GM23248 (cell line): ENCODE measurements at regions of chrX and their contacts with region 1.

Region 1: DNA sequence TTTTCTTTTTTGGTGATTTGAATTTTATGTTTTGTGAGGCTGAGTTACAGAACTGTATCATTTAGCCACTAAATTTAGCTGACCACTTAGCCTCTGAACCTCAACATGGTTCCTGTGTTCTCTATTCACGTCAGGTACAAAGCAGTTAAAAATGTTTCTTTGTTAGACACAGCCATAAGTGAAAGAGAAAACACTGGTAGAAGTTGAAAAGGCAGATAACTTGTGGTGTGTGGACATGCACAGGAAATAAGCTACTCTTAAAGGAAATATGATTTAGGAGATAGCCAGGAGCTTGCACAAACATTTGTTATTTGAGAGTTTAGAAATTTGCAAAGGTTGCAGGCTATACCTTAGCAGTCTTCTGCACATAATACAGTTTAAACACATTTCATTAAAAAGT is 171.0 kb upstream of the RPS6KA3 start:
- DNase-seq: no peak
- H3K4me3 ChIP-seq: no peak overlapping the region
- H3K27ac ChIP-seq: no peak overlapping the region
- H3K4me1 ChIP-seq: peaks cover 6% of the 10 kb centered on the region; the same call in 1 of the 2 replicates
- H3K27me3 ChIP-seq: no peaks in the 10 kb centered on the region

Region 2: GRCh38 chrX:20252381-20253231 is 185.1 kb before region 1 on chrX:
- in situ Hi-C with region 1: loop called (anchors 10 kb)
- DNase-seq: peak; percentile 51
- H3K4me3 ChIP-seq: no peak overlapping the region
- H3K27ac ChIP-seq: no peak overlapping the region
- H3K4me1 ChIP-seq: peaks cover 3% of the 10 kb centered on the region; the same call in 1 of the 2 replicates
- H3K27me3 ChIP-seq: no peaks in the 10 kb centered on the region